Activated T-helper 1 cell treated with anti-CD3 and anti-CD28 coated beads, Interleukin-12 subunit alpha, Interleukin-12 subunit beta, Interleukin-2, Interleukin-4 antibody, amounts not matched to agents 30 ng/mL and 10 ng/mL and 1 ng/mL, durations not matched to agents 14 hours and 24 hours and 36 hours (primary cell): ENCODE measurements at regions of chr1 and their contacts with region 1.

Region 1: DNA sequence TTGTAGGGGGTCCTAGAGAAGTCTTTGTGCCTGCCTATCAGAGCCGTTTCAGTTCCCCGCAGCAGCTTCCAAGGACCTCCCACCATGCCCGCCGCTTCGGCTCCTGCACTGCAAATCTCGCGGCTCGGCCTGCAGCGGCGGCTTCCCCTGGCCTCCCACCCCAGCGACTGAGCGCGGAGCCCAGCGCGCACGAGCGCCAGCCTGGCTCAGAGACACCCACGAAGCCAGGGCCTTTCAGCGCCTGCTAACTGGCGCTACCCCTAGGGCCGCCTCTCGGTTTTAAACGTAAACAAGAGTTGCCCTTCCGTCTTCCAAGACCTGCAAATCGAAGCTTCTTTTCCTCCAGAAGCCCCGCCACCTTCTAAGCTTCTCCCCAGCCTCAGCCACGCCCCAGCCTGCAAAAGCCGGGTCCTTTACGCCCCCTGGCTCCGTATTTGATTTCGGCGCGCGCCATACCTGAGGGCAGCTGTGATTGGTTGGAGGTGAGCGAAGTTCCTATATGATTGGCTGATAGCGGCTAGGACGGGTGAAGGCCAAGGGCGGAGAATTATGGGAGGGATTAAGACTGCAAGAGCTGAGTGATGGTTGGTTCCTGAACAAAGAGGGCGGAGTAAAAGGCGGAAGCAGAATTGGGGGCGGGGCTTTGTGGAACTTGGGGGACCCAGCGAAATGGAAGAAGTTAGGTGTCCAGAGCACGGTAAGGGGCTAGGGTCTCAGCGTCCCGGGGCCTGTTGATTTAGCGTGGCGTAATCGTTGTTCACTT is at the start of gene TTF2:
- DNase-seq: peak; percentile 97
- H3K4me3 Mint-ChIP-seq: no peak within 1 kb of the TSS
- H3K27ac Mint-ChIP-seq: no peak within 1 kb of the TSS
- H3K4me1 Mint-ChIP-seq: peaks cover 46% of the 10 kb centered on the region
- H3K27me3 Mint-ChIP-seq: no peaks in the 10 kb centered on the region
- total RNA-seq, gene TTF2: 103 and 114 TPM in 2 replicates

Region 2: GRCh38 chr1:116377541-116378529 is 682.0 kb before region 1 on chr1:
- intact Hi-C with region 1: loop called (anchors 1 kb)
- DNase-seq: peak; percentile 20
- H3K4me3 Mint-ChIP-seq: peak overlapping the region; percentile 85
- H3K27ac Mint-ChIP-seq: peak overlapping the region; percentile 85
- H3K4me1 Mint-ChIP-seq: peaks cover 77% of the 10 kb centered on the region
- H3K27me3 Mint-ChIP-seq: no peaks in the 10 kb centered on the region

Region 3: GRCh38 chr1:116724765-116725375 is 335.0 kb before region 1 on chr1:
- intact Hi-C with region 1: loop called (anchors 1 kb)
- DNase-seq: peak; percentile 64
- H3K4me3 Mint-ChIP-seq: no peak overlapping the region
- H3K27ac Mint-ChIP-seq: no peak overlapping the region
- H3K4me1 Mint-ChIP-seq: peaks cover 43% of the 10 kb centered on the region
- H3K27me3 Mint-ChIP-seq: no peaks in the 10 kb centered on the region

Region 4: DNA sequence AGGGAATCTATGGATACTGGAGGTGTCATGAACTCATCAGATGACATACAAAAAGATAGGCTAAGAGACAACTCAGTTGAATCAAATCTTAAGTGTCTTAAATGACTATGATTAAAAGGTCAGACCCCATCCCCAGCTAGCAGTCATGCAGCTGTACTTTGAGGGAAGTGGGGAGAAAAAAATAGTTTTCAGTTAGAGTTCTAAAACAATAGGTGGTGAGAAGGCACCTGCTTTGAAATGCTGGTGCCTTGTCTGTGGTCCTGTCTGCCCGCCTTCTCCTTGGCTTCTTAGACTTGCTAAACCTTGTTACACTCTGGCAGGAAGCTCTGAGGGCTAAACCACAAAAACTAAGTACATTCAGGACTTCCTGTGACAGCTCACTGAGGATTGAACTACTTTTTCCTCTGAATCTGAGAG is 290.3 kb before region 1 on chr1:
- intact Hi-C with region 1: loop called (anchors 1 kb)
- DNase-seq: peak; percentile 77
- H3K4me3 Mint-ChIP-seq: peak overlapping the region; percentile 84
- H3K27ac Mint-ChIP-seq: peak overlapping the region; percentile 100
- H3K4me1 Mint-ChIP-seq: peaks cover 90% of the 10 kb centered on the region
- H3K27me3 Mint-ChIP-seq: peaks cover under 1% of the 10 kb centered on the region

Region 5: DNA sequence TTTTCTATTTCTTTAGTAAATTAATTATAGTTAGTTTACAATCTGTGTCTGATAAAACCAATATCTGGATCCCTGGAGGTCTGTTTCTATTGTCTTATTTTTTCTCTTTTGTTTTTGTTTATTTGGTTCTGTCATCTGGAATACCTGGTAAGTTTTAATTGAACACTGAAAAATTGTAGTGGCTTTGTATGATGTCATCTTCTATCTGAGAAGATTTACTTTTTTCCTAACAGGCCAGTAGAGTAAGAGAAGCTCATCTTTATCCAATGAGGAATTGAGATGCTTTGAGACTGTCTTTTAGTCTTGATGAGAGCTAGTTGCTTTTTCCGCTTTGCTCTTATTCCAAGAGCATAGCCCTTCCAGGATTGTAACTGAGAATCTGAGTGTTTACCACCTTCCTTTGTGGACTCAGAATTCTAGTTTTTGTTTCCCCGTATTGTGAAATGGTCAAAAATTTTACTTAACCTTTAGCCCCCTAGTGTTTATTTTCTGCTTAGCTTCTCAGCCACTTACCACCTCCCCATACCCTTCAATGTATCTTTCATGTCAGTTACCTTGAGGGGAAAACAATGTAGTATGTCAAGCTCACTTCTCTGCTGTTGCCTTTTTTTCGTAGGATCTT is 125.2 kb before region 1 on chr1:
- intact Hi-C with region 1: loop called (anchors 2 kb)
- DNase-seq: no peak
- H3K4me3 Mint-ChIP-seq: peak overlapping the region; percentile 25
- H3K27ac Mint-ChIP-seq: peak overlapping the region; percentile 75
- H3K4me1 Mint-ChIP-seq: peaks cover 27% of the 10 kb centered on the region
- H3K27me3 Mint-ChIP-seq: no peaks in the 10 kb centered on the region

Region 6: DNA sequence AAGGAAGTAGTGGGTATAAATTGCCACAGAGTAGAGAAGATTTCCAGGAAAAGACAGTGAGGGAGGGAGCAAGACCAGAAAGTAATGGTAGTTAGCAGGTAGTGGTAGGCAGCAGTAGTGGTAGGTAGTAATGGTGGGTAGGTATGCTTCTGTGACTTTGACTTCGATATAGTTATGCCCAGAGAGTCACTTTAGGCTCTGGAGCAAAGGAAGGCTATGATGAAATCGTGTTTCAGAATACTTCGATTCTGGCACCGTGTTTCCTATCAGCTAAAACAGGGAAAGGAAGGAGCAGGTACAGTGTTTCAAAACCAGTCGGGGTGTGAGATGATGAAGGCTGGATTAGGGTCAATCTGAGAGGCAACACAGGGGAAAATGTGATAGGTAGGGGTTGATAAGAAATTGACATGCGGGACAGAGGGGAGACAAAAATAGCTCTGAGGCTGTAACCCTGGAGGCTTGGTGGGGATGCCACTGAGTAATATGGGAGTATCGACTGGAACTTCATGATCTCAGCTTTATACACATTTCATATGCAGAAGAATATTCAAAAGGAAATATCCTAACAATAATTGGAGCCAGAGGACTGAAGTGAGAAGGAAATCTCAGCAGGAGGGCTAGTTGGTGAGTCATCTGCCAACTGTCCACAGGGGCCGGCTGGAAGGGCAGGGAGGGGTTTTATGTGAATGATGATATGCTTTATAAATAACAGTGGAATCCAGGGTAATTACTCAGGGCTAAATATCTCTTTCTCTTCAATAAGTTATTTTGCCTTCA is 86.9 kb after region 1 on chr1:
- intact Hi-C with region 1: no loop called
- DNase-seq: no peak
- H3K4me3 Mint-ChIP-seq: no peak overlapping the region
- H3K27ac Mint-ChIP-seq: no peak overlapping the region
- H3K4me1 Mint-ChIP-seq: no peaks in the 10 kb centered on the region
- H3K27me3 Mint-ChIP-seq: peaks cover 11% of the 10 kb centered on the region

Region 7: DNA sequence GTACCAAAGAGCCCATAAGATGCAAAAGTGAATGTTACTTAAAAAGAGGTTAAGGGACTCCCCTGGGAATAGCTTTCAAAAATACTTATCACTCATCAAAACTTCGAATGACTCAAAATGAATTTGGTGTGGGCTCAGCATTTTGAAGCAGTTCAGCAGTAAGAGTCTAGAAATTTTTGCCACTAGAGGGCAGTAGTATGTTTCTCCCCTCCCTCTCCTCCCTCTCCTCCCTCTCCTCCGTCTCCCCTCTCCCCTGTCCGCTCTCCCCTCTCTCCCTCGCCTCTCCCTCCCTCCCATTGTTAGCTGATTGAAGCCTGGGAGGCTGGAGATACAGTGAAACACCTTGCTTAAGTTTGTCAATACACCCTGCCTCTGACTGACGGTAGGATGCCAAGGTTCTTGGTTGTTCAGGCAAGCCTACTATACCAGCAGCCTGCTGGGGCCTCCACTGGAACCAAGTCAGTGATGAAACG is 475.2 kb after region 1 on chr1:
- intact Hi-C with region 1: loop called (anchors 10 kb)
- DNase-seq: peak; percentile 24
- H3K4me3 Mint-ChIP-seq: no peak overlapping the region
- H3K27ac Mint-ChIP-seq: peak overlapping the region; percentile 26
- H3K4me1 Mint-ChIP-seq: peaks cover 16% of the 10 kb centered on the region
- H3K27me3 Mint-ChIP-seq: no peaks in the 10 kb centered on the region